Heart left ventricle (tissue), 16 donors: ENCODE measurements at regions of chr10 and their contacts with region 1.

Region 1: DNA sequence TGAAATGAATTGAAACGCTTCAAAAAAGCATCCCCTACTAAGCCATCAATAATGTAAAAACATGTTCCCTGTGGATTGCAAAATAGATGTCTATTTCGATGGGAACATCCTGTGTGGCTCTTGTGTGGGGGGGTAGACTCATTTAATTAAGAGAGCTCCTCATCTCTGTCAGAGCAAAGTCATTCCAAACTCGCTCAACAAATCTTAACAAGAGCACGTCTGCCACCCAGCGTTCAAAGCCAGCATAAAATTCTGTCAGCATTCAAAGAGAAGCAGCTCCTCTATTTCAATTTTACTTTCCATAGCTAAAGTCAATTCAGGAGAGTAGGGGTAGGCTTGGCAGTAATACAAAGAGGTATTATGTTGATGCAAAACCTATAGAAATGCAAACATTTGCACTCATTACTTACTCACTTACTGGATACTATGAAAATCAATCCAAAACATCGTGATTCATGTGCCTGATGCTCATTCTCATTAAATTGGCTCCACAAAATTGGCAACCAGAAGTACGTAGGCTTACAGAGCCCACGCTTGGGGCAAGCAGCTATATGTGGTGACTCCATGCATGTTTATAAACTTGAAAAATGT is 114.9 kb downstream of the IPMK start:
- DNase-seq: peak in 4 of 5 donors; percentile 13 to 36 (median 25)
- ATAC-seq: no peak
- H3K4me3 ChIP-seq: no peak overlapping the region
- H3K27ac ChIP-seq: no peak overlapping the region
- H3K4me1 ChIP-seq: no peaks in the 10 kb centered on the region
- H3K27me3 ChIP-seq: peaks cover 0 to 3% (median 0%) of the 10 kb centered on the region in 9 donors
- CTCF ChIP-seq: peak; percentile 15 to 60 (median 44)
- POLR2A ChIP-seq: no peak

Region 2: DNA sequence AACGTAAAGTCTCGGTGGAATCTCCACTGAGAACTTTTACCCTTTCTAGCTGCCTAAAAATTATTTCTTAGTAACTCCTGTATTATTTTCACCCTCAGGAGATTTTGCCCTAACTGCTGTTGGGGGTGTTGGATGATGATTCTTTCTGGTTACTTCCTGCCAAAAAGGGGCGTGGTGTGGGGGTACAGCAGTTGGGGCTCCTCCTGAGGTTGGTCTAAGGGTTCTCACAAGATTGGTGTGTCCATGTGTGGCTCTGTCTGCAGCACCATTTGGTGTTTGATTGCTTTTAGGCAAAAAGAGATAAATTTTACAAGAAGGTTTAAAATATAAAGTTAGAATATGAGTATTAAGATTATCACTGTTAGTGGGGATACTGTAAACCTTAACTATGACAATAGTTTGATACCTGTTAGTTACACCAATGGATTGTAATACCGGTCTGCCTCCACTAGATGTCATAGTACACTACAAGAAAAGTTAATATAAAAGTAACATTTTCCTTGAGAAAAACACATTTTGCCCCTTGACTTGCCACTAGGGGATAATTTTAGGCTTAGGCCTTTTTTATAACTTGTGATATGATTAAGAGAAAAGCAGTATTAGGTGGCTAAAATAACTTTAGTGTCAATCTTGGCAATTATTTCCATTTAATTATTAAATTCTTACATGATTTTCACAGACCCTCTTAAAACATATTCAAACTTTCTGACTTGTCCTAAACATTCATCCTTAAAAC is 813.8 kb before region 1 on chr10:
- intact Hi-C with region 1: loop called in 3 of 10 experiments (anchors 5 to 10 kb)
- DNase-seq: no peak
- ATAC-seq: no peak
- H3K4me3 ChIP-seq: no peak overlapping the region
- H3K27ac ChIP-seq: no peak overlapping the region
- H3K4me1 ChIP-seq: no peaks in the 10 kb centered on the region
- H3K27me3 ChIP-seq: no peaks in the 10 kb centered on the region
- CTCF ChIP-seq: peak; percentile 49 to 77 (median 62)
- POLR2A ChIP-seq: no peak

Region 3: GRCh38 chr10:57579926-57580325 is 572.8 kb before region 1 on chr10:
- intact Hi-C with region 1: loop called in 6 of 10 experiments (anchors 5 to 10 kb)
- DNase-seq: no peak
- ATAC-seq: peak in 3 of 4 donors; percentile 57 to 67 (median 58)
- H3K4me3 ChIP-seq: no peak overlapping the region
- H3K27ac ChIP-seq: no peak overlapping the region
- H3K4me1 ChIP-seq: no peaks in the 10 kb centered on the region
- H3K27me3 ChIP-seq: no peaks in the 10 kb centered on the region
- CTCF ChIP-seq: peak in 11 of 12 donors; percentile 5 to 56 (median 37)
- POLR2A ChIP-seq: no peak

Region 4: DNA sequence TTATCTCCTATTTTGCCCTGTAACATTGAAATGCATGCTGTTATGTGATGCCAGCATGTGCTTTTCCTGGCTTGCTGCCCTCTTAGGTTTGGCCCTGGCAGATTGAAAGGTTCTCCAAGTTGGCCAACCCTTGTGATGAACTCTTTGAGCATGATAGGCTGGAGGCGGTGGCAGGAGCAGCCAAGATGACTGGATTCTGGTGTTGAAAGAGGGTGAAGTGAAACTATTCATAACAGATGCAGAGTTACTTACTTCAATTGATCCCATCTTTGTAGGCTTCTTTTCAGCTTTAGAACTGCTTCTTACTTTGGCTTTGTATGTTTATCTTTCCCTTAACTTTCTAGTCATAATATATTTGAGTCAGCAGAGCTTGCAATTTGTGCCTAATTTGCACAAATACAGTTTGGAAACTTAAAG is 417.5 kb after region 1 on chr10:
- intact Hi-C with region 1: no loop called
- DNase-seq: no peak
- ATAC-seq: no peak
- H3K4me3 ChIP-seq: no peak overlapping the region
- H3K27ac ChIP-seq: no peak overlapping the region
- H3K4me1 ChIP-seq: peaks cover 0 to 39% (median 0%) of the 10 kb centered on the region in 12 donors
- H3K27me3 ChIP-seq: no peaks in the 10 kb centered on the region
- CTCF ChIP-seq: no peak
- POLR2A ChIP-seq: no peak